ENCODE measurements at regions of chr13 and their contacts with region 1.

Region 1: DNA sequence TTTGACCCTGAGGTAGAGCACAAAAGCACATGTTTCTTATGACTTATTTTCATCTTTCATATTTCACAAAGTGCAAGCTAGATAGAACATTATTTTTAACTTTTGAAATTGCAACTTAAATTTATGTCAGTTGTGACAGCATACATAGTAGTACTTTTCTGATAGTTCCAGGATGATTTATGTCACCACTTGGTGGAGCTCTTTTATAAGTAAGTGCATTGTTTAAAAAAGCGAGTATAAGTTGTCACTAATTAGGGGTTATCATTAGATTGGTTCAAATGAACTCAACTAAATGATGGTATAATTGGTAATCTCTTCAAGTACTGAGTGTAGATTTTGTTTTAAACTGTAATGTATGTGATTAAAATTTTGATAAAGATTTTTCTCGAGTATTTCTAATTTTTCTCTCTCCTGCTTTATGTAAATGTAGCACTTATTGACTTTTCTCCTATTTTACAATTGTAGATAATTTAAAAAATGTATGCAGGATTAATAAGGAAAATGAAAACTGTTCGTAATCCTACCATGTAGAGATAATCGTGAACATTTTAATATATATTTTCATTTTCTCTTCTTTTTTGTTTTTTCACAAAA is 31.1 kb downstream of the RB1 start:
- DNase-seq: no peak
- ATAC-seq: peak; percentile 37
- H3K4me3 Mint-ChIP-seq: no peak overlapping the region
- H3K27ac Mint-ChIP-seq: no peak overlapping the region
- H3K4me1 Mint-ChIP-seq: peaks cover 17% of the 10 kb centered on the region
- H3K27me3 Mint-ChIP-seq: no peaks in the 10 kb centered on the region
- CTCF ChIP-seq: peak; percentile 42

Region 2: GRCh38 chr13:48647630-48648029 is 313.0 kb after region 1 on chr13:
- CTCF ChIA-PET with region 1: no interaction called
- POLR2A ChIA-PET with region 1: no interaction called
- intact Hi-C with region 1: loop called (anchors 10 kb)
- DNase-seq: no peak
- ATAC-seq: peak; percentile 31
- H3K4me3 Mint-ChIP-seq: no peak overlapping the region
- H3K27ac Mint-ChIP-seq: no peak overlapping the region
- H3K4me1 Mint-ChIP-seq: no peaks in the 10 kb centered on the region
- H3K27me3 Mint-ChIP-seq: peaks cover 16% of the 10 kb centered on the region
- CTCF ChIP-seq: no peak

Measured in activated B cell treated with CpG ODN at 0.5 μM for 24 hours (primary cell).